AG04449 (cell line): ENCODE measurements at regions of chr11 and their contacts with region 1.

Region 1: GRCh38 chr11:112588252-112588694 is 327.6 kb upstream of the PLET1 start:
- DNase-seq: peak; percentile 33
- H3K4me3 ChIP-seq: no peak overlapping the region
- CTCF ChIP-seq: peak; percentile 70

Region 2: DNA sequence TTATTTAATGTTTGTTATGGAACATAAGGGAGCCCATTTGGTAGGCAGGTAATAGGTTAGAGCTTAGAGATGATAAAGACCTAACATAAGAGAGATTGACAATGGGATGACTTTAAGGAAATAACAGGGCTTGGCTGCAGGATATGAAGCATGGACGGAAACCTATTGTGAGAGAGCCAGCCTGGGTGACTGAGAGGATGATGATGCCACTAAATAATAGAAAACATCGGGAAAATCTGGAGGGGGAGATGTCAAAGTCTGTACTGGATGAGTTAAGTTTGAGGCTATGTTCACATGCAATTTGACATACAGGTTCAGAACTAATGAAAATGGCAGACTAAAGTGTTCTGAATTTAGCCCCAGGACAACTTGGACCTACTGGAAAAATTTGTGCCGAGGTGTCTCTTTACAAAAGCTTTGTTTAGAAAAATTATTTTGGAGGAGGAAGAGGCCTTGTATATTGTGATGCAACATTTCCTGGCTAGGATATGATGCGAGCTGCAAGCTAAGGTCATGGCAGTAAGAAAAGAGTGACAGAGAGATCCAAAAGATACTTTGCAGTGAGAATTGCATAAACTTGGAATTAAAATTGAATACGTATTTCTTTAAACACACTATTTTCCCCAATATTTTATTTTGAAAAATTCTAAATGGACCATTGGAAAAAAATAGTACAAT is 11.7 kb after region 1 on chr11:
- CTCF ChIA-PET with region 1: interaction called, 15 read pairs
- POLR2A ChIA-PET with region 1: no interaction called
- DNase-seq: no peak
- H3K4me3 ChIP-seq: no peak overlapping the region
- CTCF ChIP-seq: no peak

Region 3: DNA sequence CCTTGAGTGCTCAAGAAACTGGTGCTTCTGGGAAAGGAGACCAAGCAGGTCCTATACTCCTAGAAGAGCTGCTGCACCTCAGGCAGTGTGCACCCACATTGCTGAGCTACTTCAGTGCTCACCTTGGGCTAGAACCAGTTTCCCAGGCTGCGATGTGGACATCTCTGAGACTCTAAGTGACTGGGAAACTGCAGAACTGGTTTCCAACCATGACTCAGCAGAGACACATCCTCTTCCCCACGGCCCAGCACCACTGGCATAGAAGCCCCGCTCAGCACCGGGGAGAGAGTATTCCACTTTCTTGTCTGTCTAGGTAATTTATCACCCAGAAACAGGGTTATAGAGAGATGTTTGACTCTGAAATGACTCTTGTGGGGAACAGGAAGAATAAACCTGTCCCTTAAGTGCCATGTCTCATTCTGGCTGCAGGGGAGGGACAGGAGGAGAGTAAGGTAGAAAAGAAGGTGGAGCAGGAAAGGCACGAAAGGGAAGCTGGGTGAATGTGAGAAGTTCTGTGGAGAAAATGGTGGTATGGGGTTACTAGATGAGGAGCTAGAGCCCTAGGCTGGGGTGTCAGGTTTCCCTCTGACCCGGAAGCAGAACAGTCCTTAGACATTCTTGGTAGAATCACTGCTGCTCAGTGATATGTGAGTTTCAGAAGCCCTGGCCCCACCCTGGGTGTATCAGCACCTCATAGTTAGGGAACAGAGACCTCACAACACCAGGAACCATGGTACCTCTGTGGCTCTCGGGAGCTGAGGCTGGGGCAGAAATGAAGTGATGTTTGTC is 32.5 kb after region 1 on chr11:
- CTCF ChIA-PET with region 1: interaction called, 13 read pairs
- POLR2A ChIA-PET with region 1: no interaction called
- DNase-seq: no peak
- H3K4me3 ChIP-seq: no peak overlapping the region
- CTCF ChIP-seq: no peak

Region 4: DNA sequence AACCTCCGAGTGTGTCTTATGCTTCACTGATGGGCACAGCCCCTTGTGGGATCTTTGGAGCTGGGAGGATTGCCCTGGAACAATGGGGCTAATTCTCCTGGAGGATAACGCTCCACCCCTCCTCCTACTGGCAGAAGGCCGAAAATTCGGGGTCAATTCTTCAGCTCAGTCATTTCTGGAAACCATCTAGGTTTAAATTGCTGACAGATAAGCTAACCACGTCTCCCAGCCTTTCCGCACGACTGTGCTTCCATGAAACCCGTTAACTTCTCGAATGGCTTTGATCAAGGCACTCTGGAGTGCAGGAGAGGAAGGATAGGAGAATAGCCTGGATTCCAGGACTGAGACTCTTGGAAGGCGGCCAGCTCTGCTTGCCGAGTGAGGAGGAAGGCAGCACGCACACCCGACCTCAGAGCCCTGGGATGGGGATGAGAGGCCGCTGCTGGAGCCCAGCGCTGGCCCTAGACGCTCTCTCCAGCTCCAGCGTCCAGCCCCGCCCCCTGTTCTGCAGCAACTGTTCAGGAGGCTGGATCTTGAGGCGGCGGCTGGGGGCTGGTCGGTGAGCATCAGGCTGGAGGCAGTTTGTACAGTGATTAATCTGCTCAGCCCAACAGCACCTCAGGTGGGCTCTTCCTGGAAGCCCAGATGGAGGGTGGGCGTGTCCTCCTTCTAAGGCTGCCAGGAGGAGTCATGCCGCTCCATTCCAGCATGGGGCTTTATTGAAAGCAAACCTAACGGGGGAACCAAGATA is 196.2 kb after region 1 on chr11:
- CTCF ChIA-PET with region 1: interaction called, 10 read pairs
- POLR2A ChIA-PET with region 1: no interaction called
- DNase-seq: no peak
- H3K4me3 ChIP-seq: no peak overlapping the region
- CTCF ChIP-seq: no peak

Region 5: GRCh38 chr11:112795142-112795815 is 207.0 kb after region 1 on chr11:
- CTCF ChIA-PET with region 1: interaction called, 61 read pairs
- POLR2A ChIA-PET with region 1: no interaction called
- DNase-seq: no peak
- H3K4me3 ChIP-seq: no peak overlapping the region
- CTCF ChIP-seq: peak; percentile 51

Region 6: GRCh38 chr11:113113801-113114706 is 525.8 kb after region 1 on chr11:
- CTCF ChIA-PET with region 1: interaction called, 21 read pairs
- POLR2A ChIA-PET with region 1: no interaction called
- DNase-seq: peak; percentile 5
- H3K4me3 ChIP-seq: no peak overlapping the region
- CTCF ChIP-seq: peak; percentile 77

Region 7: GRCh38 chr11:113289431-113290187 is 701.3 kb after region 1 on chr11:
- CTCF ChIA-PET with region 1: interaction called, 112 read pairs
- POLR2A ChIA-PET with region 1: no interaction called
- DNase-seq: no peak
- H3K4me3 ChIP-seq: no peak overlapping the region
- CTCF ChIP-seq: peak; percentile 94